ENCODE measurements at regions of chr13 and their contacts with region 1.

Region 1: DNA sequence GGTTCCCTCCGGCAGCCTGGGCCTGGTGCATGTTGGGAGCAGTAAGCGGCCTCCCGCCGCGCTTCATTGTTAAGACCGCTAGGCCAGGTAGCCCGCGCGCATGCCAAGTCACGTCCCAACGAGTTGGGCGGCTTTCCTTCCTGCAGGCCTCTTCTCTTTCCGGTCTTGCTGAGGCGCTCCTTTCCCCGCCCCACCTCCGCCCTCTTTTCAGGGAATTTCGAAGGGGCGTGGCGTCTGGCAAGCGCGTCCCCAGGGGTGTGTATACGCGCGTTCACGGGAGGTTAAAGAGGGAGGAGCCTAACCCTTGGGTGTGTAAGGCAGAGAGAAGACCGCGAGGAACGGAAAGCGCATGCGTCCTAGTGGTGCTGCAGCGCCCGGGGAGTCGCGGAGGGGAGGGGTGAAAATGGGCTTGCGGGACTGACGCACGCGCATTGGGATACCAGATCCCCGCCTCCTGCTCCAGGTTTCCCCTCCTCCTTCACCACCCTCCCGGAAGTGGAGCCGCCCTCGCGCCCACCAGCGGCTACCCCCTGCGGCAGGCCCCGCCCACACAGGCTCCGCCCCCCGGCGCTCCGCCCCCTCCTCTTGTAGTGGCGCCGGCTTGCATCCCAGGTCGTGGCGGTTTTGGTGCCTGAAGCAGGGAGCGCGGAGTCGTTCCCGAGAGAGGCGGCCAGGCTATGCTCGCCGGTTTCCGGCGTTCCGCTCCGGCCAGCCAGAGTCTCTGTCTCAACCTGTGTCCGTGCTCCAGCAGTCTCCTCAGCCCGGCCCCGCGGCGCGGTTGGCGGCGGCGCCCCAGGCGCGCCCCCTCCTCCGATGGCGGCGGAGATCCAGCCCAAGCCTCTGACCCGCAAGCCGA is at the start of gene WDFY2:
- DNase-seq: peak; percentile 99 to 100 (median 100)
- ATAC-seq: peak; percentile 87 to 95 (median 90)
- H3K4me3 ChIP-seq: peak within 1 kb of the TSS; percentile 88 to 96 (median 92)
- H3K27ac ChIP-seq: peak within 1 kb of the TSS; percentile 85 to 95 (median 92)
- H3K4me1 ChIP-seq: peaks cover 3 to 32% (median 23%) of the 10 kb centered on the region in 3 donors
- H3K27me3 ChIP-seq: no peaks in the 10 kb centered on the region
- CTCF ChIP-seq: peak in 1 of 4 donors; percentile 11
- total RNA-seq, gene WDFY2: 16.0 to 25.2 (median 17.5) TPM

Region 2: DNA sequence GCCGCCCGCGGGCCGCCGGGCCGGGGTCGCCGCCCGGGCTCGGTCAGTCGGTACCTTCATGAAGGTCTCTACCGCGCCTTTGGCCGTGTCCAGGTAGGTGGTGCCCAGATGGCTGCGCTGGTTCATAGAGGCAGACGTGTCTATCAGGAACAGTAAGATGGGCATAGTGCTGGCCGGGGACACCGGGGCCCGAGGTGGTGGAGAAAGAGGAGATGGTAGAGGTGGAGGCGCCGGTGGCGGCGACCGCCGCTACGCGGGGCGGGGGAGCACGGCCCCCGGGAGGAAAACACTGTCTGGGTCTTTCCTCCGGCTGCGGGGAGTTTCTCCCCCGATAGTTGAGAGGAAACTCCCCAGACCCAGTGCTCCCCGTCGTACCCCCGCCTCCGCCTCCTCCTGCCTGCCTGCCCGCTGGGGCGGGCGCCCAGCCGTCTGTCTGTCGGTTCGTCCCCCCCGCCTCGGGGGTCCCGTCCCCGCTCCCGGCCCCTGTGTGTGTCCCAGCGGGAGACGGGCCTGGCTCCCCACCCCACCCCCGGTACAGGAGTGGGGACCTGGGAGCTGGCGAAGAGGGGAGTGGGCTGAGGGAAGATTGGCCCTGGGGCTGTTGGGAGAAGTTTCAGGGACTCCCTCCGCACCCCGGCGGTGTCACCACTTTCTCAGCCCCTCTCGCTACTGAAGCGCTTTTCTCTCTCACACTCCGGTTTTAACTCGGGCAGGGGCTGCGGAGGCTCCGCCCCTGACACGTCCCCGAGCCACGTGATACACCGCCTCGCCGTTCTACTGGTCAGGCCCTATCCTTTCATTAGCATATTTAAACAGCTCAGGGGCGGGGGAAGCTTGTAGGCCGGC is 131.5 kb before region 1 on chr13 and contains the start of gene INTS6:
- intact Hi-C with region 1: loop called in 2 of 3 experiments (anchors 5 to 10 kb)
- DNase-seq: peak; percentile 96 to 100 (median 99)
- ATAC-seq: peak; percentile 82 to 92 (median 84)
- H3K4me3 ChIP-seq: peak within 1 kb of the TSS; percentile 90 to 94 (median 91)
- H3K27ac ChIP-seq: peak within 1 kb of the TSS; percentile 95 to 99 (median 98)
- H3K4me1 ChIP-seq: peaks cover 11 to 31% (median 26%) of the 10 kb centered on the region in 3 donors
- H3K27me3 ChIP-seq: no peaks in the 10 kb centered on the region
- CTCF ChIP-seq: no peak
- total RNA-seq, gene INTS6: 23.7 to 44.8 (median 29.7) TPM

Region 3: GRCh38 chr13:51729866-51730546 is 145.9 kb after region 1 on chr13:
- intact Hi-C with region 1: loop called in 1 of 3 experiments (anchors 10 kb)
- DNase-seq: peak in 1 of 6 donors; percentile 55
- ATAC-seq: peak; percentile 27 to 65 (median 44)
- H3K4me3 ChIP-seq: no peak overlapping the region
- H3K27ac ChIP-seq: peak overlapping the region in 2 of 4 donors; percentile 75 to 85
- H3K4me1 ChIP-seq: peaks cover 44 to 65% (median 57%) of the 10 kb centered on the region in 3 donors
- H3K27me3 ChIP-seq: no peaks in the 10 kb centered on the region
- CTCF ChIP-seq: no peak

Region 4: GRCh38 chr13:51740698-51741097 is 156.6 kb after region 1 on chr13:
- intact Hi-C with region 1: no loop called
- DNase-seq: no peak
- ATAC-seq: peak in 3 of 4 donors; percentile 10 to 39 (median 26)
- H3K4me3 ChIP-seq: no peak overlapping the region
- H3K27ac ChIP-seq: no peak overlapping the region
- H3K4me1 ChIP-seq: peaks cover 0 to 3% (median 0%) of the 10 kb centered on the region in 3 donors
- H3K27me3 ChIP-seq: no peaks in the 10 kb centered on the region
- CTCF ChIP-seq: no peak

Region 5: GRCh38 chr13:51781246-51782022 is 197.3 kb after region 1 on chr13:
- intact Hi-C with region 1: loop called in 1 of 3 experiments (anchors 10 kb)
- DNase-seq: peak in 5 of 6 donors; percentile 51 to 78 (median 72)
- ATAC-seq: peak; percentile 57 to 72 (median 58)
- H3K4me3 ChIP-seq: no peak overlapping the region
- H3K27ac ChIP-seq: peak overlapping the region; percentile 61 to 88 (median 75)
- H3K4me1 ChIP-seq: peaks cover 76 to 83% (median 82%) of the 10 kb centered on the region in 3 donors
- H3K27me3 ChIP-seq: no peaks in the 10 kb centered on the region
- CTCF ChIP-seq: no peak

Measured in pancreas (tissue), 10 donors.